PC-9 (cell line): ENCODE measurements at regions of chr2 and their contacts with region 1.

Region 1: DNA sequence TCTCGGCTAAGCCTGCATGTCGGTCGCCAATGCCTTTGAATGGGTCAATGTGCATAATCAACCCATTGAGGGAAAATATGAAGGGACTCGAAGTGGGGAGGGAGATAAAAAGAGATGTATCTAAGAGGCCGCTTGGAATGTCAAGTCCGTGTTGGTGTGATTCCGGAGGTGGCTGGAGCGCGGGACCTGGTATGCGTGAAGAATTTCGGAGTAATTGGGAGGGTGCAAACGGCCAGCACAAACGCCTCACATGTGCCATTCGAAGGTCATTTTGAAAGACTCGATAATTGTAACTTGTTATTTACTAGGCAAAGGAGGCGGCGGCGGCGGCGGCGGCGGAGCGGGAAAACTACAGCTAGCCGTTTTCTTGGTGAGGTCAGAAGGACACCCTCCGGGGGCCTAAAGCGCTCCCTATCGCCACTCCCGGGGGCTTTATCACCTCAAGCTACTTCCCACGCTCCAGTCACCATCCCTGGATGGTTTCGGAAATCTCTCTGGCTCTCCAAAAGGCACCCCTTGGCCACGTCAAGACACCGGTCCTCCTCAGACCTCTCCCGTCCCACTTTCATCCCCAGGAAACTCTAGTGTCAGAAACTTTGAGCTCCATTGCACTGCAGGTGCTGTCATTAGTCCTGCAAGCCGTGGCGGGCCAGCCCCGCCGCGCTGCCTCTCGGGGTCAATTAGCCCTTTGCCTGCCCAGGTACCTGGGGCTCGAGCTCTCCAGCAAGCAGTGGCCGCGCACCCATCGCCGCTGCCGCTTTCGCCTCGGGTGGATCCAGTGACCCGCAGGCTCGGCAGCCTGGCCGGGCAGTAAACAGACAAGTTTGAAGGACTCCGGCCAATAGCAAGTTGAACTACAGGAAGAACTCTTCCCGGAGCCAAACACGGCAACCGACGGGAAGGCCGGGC is 1.5 kb downstream of the ERBB4 start:
- DNase-seq: peak in 1 of 2 experiments; percentile 19
- H3K4me3 ChIP-seq: peak overlapping the region; percentile 72
- H3K27ac ChIP-seq: no peak overlapping the region
- H3K4me1 ChIP-seq: no peaks in the 10 kb centered on the region
- H3K27me3 ChIP-seq: no peaks in the 10 kb centered on the region
- CTCF ChIP-seq: no peak

Region 2: DNA sequence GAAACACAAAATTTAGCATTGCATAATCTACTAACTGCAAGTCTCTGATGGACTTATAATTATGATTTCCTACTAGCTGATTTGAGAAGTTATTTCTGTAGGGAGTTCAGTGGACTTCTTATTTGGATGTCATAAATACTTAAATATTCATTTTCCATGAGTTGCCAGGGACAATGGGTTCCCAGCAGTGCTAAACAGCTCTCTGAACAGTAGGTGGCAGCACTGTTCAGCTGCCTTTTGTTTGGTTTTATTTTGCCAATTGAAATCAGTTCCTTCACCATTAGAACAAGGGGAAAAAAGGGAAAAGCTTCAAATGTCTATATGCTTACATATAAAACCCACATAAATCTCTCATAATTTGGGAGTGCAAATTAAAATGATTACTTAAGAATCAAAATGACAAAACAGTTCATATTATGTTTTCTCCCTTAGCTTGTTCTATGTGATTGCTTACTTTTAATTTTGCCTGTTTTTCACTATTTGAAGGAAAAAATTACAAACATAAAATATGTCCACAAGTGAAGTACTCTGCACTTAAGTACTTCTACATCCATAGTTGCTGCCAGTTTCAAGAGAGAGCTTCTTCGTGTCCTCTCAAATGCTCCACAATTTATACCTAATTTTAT is 1081.7 kb before region 1 on chr2:
- CTCF ChIA-PET with region 1: interaction called, 10 read pairs
- POLR2A ChIA-PET with region 1: no interaction called
- intact Hi-C with region 1: no loop called
- DNase-seq: peak in 1 of 2 experiments; percentile 6
- H3K4me3 ChIP-seq: no peak overlapping the region
- H3K27ac ChIP-seq: no peak overlapping the region
- H3K4me1 ChIP-seq: no peaks in the 10 kb centered on the region
- H3K27me3 ChIP-seq: no peaks in the 10 kb centered on the region
- CTCF ChIP-seq: peak; percentile 76

Region 3: GRCh38 chr2:212409560-212409959 is 127.5 kb before region 1 on chr2:
- CTCF ChIA-PET with region 1: no interaction called
- POLR2A ChIA-PET with region 1: no interaction called
- intact Hi-C with region 1: no loop called
- DNase-seq: no peak
- H3K4me3 ChIP-seq: no peak overlapping the region
- H3K27ac ChIP-seq: no peak overlapping the region
- H3K4me1 ChIP-seq: no peaks in the 10 kb centered on the region
- H3K27me3 ChIP-seq: no peaks in the 10 kb centered on the region
- CTCF ChIP-seq: no peak

Region 4: GRCh38 chr2:212549463-212549862 is 12.4 kb after region 1 on chr2:
- CTCF ChIA-PET with region 1: no interaction called
- POLR2A ChIA-PET with region 1: interaction called, 18 read pairs
- intact Hi-C with region 1: no loop called
- DNase-seq: no peak
- H3K4me3 ChIP-seq: no peak overlapping the region
- H3K27ac ChIP-seq: no peak overlapping the region
- H3K4me1 ChIP-seq: no peaks in the 10 kb centered on the region
- H3K27me3 ChIP-seq: no peaks in the 10 kb centered on the region
- CTCF ChIP-seq: no peak